ENCODE measurements at regions of chr1 and their contacts with region 1.

Region 1: DNA sequence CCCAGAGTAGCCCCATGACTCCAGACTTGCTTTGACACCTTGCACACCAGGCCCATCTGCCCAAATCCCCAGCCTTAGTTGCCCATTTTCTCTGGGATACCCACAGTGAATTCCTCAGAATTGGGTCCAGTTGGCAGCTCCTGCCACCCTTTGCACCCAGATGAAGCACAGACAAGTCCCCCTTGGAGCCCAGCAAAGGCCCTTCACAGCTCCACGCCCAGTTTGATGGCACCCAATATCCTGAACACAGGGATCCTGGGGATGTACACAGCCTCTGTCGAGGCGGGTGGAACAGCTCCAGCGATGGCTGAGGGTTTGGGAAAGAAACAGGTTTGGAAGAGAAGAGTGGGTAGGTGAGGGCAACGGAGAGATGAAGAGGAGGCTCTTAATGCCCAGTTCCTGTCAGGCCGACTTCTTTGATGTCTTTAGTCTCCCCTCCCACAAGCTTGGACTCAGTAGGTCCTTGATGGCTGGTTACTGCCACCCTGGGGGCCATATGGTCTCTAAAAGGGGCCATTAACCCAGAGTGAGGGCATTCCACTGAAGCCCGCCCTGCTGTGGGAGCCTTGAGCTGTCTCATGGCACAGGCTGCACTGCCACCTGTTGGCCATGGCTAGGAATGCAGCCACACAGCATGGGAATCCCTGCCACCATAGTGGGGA is 21.7 kb downstream of the TMEM53 start:
- DNase-seq: peak; percentile 92
- H3K4me3 Mint-ChIP-seq: no peak overlapping the region
- H3K27ac Mint-ChIP-seq: peak overlapping the region; percentile 70
- H3K4me1 Mint-ChIP-seq: no peaks in the 10 kb centered on the region
- H3K27me3 Mint-ChIP-seq: no peaks in the 10 kb centered on the region

Region 2: GRCh38 chr1:44377925-44378784 is 274.4 kb before region 1 on chr1:
- intact Hi-C with region 1: loop called (anchors 1 kb)
- DNase-seq: peak; percentile 80
- H3K4me3 Mint-ChIP-seq: no peak overlapping the region
- H3K27ac Mint-ChIP-seq: no peak overlapping the region
- H3K4me1 Mint-ChIP-seq: no peaks in the 10 kb centered on the region
- H3K27me3 Mint-ChIP-seq: peaks cover 7% of the 10 kb centered on the region

Region 3: GRCh38 chr1:44553771-44554170 is 98.8 kb before region 1 on chr1:
- intact Hi-C with region 1: no loop called
- DNase-seq: no peak
- H3K4me3 Mint-ChIP-seq: no peak overlapping the region
- H3K27ac Mint-ChIP-seq: no peak overlapping the region
- H3K4me1 Mint-ChIP-seq: no peaks in the 10 kb centered on the region
- H3K27me3 Mint-ChIP-seq: peaks cover 3% of the 10 kb centered on the region

Region 4: GRCh38 chr1:44571712-44572571 is 80.6 kb before region 1 on chr1:
- intact Hi-C with region 1: loop called (anchors 2 kb)
- DNase-seq: peak; percentile 71
- H3K4me3 Mint-ChIP-seq: no peak overlapping the region
- H3K27ac Mint-ChIP-seq: no peak overlapping the region
- H3K4me1 Mint-ChIP-seq: no peaks in the 10 kb centered on the region
- H3K27me3 Mint-ChIP-seq: peaks cover 19% of the 10 kb centered on the region

Region 5: DNA sequence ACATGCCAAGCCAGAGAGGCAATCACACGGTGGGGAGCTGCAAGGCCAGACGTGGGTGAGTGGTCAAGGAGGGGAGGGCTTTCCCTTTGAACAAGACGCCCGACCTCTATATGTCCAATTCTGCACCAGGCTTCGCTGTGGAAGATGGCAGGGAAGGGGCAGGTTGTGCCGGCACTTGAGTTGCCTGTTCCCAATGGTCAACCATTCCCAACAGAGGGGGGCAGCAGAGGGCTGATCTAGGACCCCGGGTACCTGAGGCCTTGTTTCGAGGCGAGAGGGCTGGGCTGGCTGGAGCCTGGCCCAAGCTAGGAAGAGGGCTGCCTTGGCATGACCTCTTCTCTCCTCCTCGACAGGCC is 43.2 kb before region 1 on chr1:
- intact Hi-C with region 1: loop called (anchors 1 kb)
- DNase-seq: peak; percentile 65
- H3K4me3 Mint-ChIP-seq: no peak overlapping the region
- H3K27ac Mint-ChIP-seq: no peak overlapping the region
- H3K4me1 Mint-ChIP-seq: no peaks in the 10 kb centered on the region
- H3K27me3 Mint-ChIP-seq: peaks cover 2% of the 10 kb centered on the region